ENCODE measurements at regions of chr7 and their contacts with region 1.

Region 1: DNA sequence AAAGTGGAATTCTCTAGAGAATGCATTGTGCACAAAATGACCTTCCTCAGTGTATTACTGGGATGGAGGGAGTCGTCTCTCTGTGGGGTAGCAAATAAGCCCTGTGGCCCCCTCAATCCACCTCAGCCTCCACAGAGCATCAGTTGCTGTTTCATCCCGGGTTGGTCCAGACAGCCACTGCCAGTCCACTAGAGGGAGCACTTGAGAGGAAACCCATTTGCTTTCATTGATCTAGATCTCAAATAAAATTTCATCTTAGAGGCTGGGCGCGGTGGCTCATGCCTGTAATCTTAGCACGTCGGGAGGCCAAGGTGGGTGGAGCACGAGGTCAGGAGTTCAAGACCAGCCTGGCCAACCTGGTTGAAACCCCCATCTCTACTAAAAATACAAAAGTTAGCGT is 1128.7 kb downstream of the CNTNAP2 start:
- DNase-seq: no peak
- ATAC-seq: peak; percentile 52

Region 2: GRCh38 chr7:147833557-147833956 is 588.3 kb after region 1 on chr7:
- intact Hi-C with region 1: no loop called
- DNase-seq: no peak
- ATAC-seq: no peak

Region 3: DNA sequence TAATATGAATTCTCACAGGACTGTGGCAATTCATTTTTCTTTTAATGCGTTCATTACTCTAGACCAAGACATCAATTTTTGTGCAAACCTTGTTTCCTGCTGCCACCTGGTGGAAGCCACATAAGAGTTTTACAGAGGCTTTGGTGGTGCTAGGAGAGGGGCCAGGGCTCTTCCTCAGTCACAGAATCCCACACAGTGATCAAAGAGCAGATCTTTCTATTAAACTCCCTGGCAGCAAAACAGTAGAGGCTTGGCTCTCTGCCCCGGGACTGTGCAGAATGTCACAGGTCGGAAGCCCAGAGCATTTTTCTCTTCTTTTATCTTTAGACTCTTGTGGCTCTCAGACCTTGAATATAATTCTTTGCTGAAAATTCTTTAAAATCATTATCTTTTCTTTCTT is 838.8 kb after region 1 on chr7:
- intact Hi-C with region 1: loop called (anchors 5 kb)
- DNase-seq: no peak
- ATAC-seq: no peak

Region 4: GRCh38 chr7:148262721-148263229 is 1017.5 kb after region 1 on chr7:
- intact Hi-C with region 1: loop called (anchors 5 kb)
- DNase-seq: peak; percentile 75
- ATAC-seq: peak; percentile 80

Measured in Right ventricle myocardium inferior (tissue), 1 donor.